Activated B cell treated with CpG ODN at 0.5 μM for 24 hours (primary cell): ENCODE measurements at regions of chr21 and their contacts with region 1.

Region 1: GRCh38 chr21:44927587-44928461 is 7.1 kb upstream of the ITGB2 start:
- DNase-seq: peak; percentile 57
- ATAC-seq: peak; percentile 61
- H3K4me3 Mint-ChIP-seq: peak overlapping the region; percentile 79
- H3K27ac Mint-ChIP-seq: peak overlapping the region; percentile 93
- H3K4me1 Mint-ChIP-seq: peaks cover 86% of the 10 kb centered on the region
- H3K27me3 Mint-ChIP-seq: no peaks in the 10 kb centered on the region
- CTCF ChIP-seq: no peak

Region 2: GRCh38 chr21:44568754-44569556 is 358.9 kb before region 1 on chr21:
- CTCF ChIA-PET with region 1: no interaction called
- POLR2A ChIA-PET with region 1: interaction called, 10 read pairs
- intact Hi-C with region 1: no loop called
- DNase-seq: no peak
- ATAC-seq: no peak
- H3K4me3 Mint-ChIP-seq: no peak overlapping the region
- H3K27ac Mint-ChIP-seq: no peak overlapping the region
- H3K4me1 Mint-ChIP-seq: peaks cover 30% of the 10 kb centered on the region
- H3K27me3 Mint-ChIP-seq: peaks cover 6% of the 10 kb centered on the region
- CTCF ChIP-seq: no peak

Region 3: GRCh38 chr21:44653656-44654575 is 273.9 kb before region 1 on chr21:
- CTCF ChIA-PET with region 1: no interaction called
- POLR2A ChIA-PET with region 1: no interaction called
- intact Hi-C with region 1: no loop called
- DNase-seq: no peak
- ATAC-seq: no peak
- H3K4me3 Mint-ChIP-seq: no peak overlapping the region
- H3K27ac Mint-ChIP-seq: no peak overlapping the region
- H3K4me1 Mint-ChIP-seq: peaks cover 2% of the 10 kb centered on the region
- H3K27me3 Mint-ChIP-seq: peaks cover 22% of the 10 kb centered on the region
- CTCF ChIP-seq: no peak

Region 4: GRCh38 chr21:44817506-44817880 is 110.3 kb before region 1 on chr21:
- CTCF ChIA-PET with region 1: no interaction called
- POLR2A ChIA-PET with region 1: interaction called, 10 read pairs
- intact Hi-C with region 1: loop called (anchors 5 kb)
- DNase-seq: peak; percentile 89
- ATAC-seq: peak; percentile 93
- H3K4me3 Mint-ChIP-seq: peak overlapping the region; percentile 53
- H3K27ac Mint-ChIP-seq: no peak overlapping the region
- H3K4me1 Mint-ChIP-seq: peaks cover 12% of the 10 kb centered on the region
- H3K27me3 Mint-ChIP-seq: no peaks in the 10 kb centered on the region
- CTCF ChIP-seq: no peak

Region 5: DNA sequence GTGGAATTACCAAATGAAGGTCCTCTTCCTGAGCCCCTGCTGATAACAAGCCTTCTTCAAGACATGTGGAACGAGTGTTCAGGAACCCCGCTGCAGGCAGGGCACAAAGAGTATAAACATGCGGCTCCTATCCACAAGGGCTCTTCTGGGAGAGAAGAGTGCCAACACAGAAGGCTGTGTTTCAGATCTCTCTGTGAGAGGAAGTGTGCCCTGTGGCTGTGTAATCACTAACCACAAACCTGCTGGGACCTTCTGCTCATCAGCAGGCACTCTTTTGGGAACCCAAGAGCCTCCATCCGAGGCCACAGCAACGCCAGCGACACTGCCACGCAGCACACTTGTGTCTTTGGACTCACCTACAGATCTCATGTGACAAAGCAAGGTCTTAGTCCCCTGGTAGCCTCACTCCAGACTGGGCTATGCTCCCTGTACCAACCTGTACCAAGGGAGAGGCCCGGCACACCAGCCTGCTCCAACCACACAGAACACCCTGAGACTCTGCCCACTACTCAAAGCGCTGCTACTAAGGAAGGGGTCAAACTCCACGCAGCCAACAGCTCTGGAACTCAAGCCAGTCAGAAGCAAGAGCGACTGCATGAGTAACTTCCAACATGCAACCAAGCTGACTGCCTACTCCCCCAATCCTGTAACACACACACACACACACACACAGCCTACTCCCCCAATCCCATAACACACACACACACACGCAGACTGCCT is 62.1 kb before region 1 on chr21:
- CTCF ChIA-PET with region 1: interaction called, 3 read pairs
- POLR2A ChIA-PET with region 1: interaction called, 6 read pairs
- intact Hi-C with region 1: loop called (anchors 1 kb)
- DNase-seq: peak; percentile 54
- ATAC-seq: peak; percentile 96
- H3K4me3 Mint-ChIP-seq: peak overlapping the region; percentile 73
- H3K27ac Mint-ChIP-seq: peak overlapping the region; percentile 81
- H3K4me1 Mint-ChIP-seq: peaks cover 58% of the 10 kb centered on the region
- H3K27me3 Mint-ChIP-seq: no peaks in the 10 kb centered on the region
- CTCF ChIP-seq: no peak

Region 6: GRCh38 chr21:44911389-44912157 is 16.3 kb before region 1 on chr21:
- CTCF ChIA-PET with region 1: interaction called, 14 read pairs
- POLR2A ChIA-PET with region 1: interaction called, 63 read pairs
- intact Hi-C with region 1: loop called (anchors 1 kb)
- DNase-seq: no peak
- ATAC-seq: peak; percentile 36
- H3K4me3 Mint-ChIP-seq: peak overlapping the region; percentile 58
- H3K27ac Mint-ChIP-seq: peak overlapping the region; percentile 57
- H3K4me1 Mint-ChIP-seq: peaks cover 88% of the 10 kb centered on the region
- H3K27me3 Mint-ChIP-seq: no peaks in the 10 kb centered on the region
- CTCF ChIP-seq: no peak

Region 7: DNA sequence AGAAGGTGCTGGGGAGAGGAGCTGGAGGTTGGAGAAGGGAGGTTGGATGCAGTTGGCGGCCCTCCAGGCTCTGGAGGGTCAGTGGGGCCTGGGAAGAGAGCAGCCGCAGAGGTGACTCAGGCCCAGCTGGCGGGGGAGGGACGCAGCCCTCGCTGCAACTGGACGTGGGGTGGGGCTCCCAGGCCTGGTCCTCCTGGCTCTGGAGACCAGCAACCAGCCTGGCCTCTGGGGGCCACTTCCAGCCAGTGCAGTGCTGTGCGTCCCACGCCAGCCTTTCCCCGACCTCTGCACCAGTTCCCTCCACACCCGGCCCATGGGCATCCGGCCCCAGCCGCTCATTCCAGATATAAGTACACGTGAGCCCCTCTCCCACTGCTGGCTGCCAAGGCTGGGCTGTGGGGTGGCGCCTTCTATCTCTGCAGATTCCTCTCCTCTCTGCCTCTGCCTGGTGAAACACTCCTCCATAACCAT is 439.1 kb after region 1 on chr21:
- CTCF ChIA-PET with region 1: no interaction called
- POLR2A ChIA-PET with region 1: no interaction called
- intact Hi-C with region 1: no loop called
- DNase-seq: no peak
- ATAC-seq: no peak
- H3K4me3 Mint-ChIP-seq: no peak overlapping the region
- H3K27ac Mint-ChIP-seq: no peak overlapping the region
- H3K4me1 Mint-ChIP-seq: peaks cover 11% of the 10 kb centered on the region
- H3K27me3 Mint-ChIP-seq: peaks cover 3% of the 10 kb centered on the region
- CTCF ChIP-seq: no peak

Region 8: DNA sequence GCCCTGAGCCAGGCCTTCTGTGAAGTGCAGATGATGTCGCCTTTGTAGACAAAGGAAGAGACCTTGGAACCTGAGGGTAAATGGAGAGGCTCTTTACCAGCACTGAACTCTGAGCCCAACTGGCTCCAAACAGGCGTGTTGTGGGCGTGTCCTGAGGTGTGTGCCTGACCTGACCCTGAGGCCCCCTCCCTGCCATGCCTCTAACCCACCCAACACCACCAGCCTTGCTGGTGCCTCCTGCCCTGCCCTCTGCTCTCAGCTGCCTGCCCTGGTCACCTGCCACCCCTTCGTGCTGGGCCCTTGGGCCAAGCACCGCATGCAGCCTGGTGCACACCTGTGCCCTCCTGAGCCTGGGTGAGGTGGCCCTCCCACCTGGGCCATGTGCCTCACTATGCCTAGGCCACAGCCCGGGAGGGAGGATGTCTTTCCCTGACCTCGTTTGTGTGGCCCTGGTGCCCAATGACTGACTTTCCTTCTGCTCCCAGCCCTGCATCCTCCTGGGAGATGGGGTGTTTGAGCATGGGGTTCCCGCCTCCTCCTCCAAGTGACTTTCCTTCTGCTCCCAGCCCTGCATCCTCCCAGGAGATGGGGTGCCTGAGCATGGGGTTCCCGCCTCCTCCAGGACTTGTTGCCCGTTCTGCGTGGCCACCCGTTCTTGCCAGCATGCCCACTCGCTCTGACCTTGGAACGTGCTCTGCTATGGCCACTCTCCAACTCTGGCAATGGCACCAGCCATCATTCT is 872.7 kb after region 1 on chr21:
- CTCF ChIA-PET with region 1: no interaction called
- POLR2A ChIA-PET with region 1: no interaction called
- intact Hi-C with region 1: no loop called
- DNase-seq: no peak
- ATAC-seq: no peak
- H3K4me3 Mint-ChIP-seq: no peak overlapping the region
- H3K27ac Mint-ChIP-seq: no peak overlapping the region
- H3K4me1 Mint-ChIP-seq: no peaks in the 10 kb centered on the region
- H3K27me3 Mint-ChIP-seq: peaks cover 1% of the 10 kb centered on the region
- CTCF ChIP-seq: no peak